Upper lobe of right lung (tissue), 1 donor: ENCODE measurements at regions of chr2 and their contacts with region 1.

Region 1: GRCh38 chr2:201059961-201060755 is 11.3 kb downstream of the HYCC2 start:
- DNase-seq: no peak
- ATAC-seq: peak; percentile 40
- H3K4me3 ChIP-seq: no peak overlapping the region
- H3K27ac ChIP-seq: no peak overlapping the region
- H3K4me1 ChIP-seq: peaks cover 14% of the 10 kb centered on the region
- H3K27me3 ChIP-seq: no peaks in the 10 kb centered on the region
- CTCF ChIP-seq: no peak

Region 2: GRCh38 chr2:200959301-200959700 is 100.9 kb before region 1 on chr2:
- intact Hi-C with region 1: loop called (anchors 10 kb)
- DNase-seq: no peak
- ATAC-seq: no peak
- H3K4me3 ChIP-seq: no peak overlapping the region
- H3K27ac ChIP-seq: no peak overlapping the region
- H3K4me1 ChIP-seq: peaks cover 21% of the 10 kb centered on the region
- H3K27me3 ChIP-seq: no peaks in the 10 kb centered on the region
- CTCF ChIP-seq: no peak

Region 3: DNA sequence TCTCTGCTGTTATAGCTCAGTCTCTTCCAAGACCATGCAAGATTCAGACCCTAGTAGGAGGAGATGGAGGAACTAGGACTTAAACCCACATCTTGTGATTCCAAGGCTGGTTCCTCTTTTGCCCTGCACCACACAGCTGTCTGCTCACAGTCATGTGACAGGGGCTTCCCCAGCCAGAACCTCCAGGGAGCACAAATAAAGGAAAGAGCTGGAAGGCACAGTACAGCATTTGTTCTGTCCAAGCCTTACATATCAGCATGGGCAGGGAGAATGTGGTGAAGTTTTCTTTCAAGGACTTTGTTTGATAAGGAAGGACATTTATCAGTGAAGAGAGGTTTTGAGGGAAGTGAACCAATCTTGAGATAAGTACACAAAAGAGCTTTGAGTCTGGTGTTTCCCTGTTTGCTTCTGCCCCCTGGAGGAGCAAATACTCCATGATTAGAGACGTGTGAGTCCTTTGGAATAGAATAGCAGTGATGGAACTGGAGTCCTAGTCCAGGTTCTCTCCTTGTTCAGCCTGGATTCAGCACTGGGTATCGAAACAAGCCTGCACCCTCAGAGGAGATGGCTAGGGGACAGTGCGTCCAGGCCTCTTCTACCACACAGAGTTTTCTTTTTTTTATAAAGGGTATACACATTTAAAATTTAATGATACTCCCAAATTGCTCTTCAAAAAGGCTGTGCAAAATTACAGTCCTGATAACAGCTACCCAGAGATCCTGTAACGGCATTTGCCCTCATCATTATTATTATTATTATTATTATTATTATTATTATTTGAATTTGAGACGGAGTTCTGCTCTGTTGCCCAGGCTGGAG is 98.2 kb after region 1 on chr2:
- intact Hi-C with region 1: no loop called
- DNase-seq: peak; percentile 80
- ATAC-seq: peak; percentile 94
- H3K4me3 ChIP-seq: no peak overlapping the region
- H3K27ac ChIP-seq: peak overlapping the region; percentile 55
- H3K4me1 ChIP-seq: peaks cover 43% of the 10 kb centered on the region
- H3K27me3 ChIP-seq: no peaks in the 10 kb centered on the region
- CTCF ChIP-seq: peak; percentile 72